ENCODE measurements at regions of chr4 and their contacts with region 1.

Region 1: DNA sequence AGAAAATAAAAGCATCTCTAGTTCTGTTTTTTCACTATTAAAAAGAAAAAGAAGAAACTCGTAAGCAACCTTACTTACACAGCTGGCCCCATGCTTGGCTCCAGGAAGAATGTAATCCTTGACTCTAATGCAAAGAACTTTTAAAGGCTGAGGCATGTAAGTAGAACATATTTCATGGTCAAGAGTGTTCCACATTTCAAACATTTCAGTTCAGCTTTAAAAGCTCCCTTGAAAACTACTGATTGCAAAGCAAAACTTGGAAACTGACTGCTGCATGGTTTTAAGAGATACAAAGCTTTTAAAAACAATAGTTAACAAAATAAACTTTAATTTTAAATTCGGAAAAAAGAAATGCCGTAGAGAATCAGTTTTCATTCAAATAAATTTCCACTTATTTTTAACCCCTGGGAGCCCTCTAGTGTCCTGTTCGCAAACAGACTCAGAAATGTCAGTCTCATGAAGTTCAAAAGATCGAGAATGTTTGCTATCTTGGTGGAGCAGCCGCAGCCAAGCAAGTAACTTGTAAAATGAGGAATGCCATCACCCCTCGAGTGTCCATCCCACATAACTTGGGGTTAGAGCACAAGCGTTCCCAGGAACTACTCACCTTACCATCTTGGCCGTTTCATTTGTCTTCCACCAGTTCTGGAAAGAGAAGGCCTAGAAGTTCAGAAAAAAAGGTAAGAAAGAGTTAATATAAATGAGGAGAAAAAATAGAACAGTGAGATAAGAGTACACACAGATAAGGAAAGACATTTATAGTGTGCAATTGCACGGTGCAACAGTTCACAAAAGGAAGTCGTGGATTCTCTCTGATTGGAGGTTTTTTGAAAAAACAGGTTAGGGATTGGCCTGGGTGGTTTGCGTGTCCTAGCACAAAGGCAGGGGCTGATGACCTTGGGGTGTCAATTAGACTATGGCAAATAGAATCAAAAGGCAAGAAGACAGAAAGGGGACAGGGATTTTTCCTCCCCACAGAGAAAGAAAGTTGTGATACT is at the start of gene GASK1B:
- DNase-seq: peak in 4 of 5 donors; percentile 39 to 57 (median 50)
- ATAC-seq: peak; percentile 49 to 74 (median 65)
- H3K4me3 ChIP-seq: peak within 1 kb of the TSS; percentile 30 to 73 (median 67)
- H3K27ac ChIP-seq: peak within 1 kb of the TSS; percentile 82 to 93 (median 88)
- H3K4me1 ChIP-seq: peaks cover 0 to 64% (median 41%) of the 10 kb centered on the region in 12 donors
- H3K27me3 ChIP-seq: no peaks in the 10 kb centered on the region
- CTCF ChIP-seq: peak; percentile 41 to 78 (median 71)
- POLR2A ChIP-seq: no peak
- total RNA-seq, gene GASK1B: 34.5 to 108 (median 73.9) TPM

Region 2: DNA sequence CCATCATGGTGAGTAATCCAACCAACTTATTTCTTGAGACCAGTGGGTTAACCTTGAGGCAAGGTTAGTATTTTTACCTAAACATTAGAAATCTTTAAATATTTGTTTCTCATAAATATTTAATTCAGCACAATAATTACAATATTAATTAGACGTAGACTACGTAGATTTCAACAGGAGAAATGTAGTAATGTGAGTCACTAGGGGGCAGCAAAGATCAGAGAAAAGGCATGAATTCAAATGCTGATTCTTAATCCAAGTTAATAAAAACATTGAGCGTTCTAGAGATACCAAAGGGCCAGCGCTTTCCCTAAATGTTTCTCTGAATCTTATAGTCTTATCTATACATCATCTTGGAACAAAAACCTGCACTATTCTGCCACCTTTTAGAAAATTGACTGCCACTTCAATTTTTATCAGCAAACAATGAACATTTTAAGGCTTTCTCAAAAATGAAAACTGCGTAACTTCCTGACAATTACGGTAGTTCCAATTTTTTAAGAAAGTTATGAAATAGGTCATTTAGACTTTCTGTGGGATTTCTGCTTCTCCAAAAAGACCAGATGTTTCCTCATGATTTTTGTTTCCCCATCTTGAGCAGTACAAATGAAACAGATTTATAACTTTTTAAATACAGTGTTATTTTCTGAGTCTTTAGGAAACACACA is 180.4 kb before region 1 on chr4:
- intact Hi-C with region 1: loop called (anchors 1 to 5 kb)
- DNase-seq: peak in 2 of 5 donors; percentile 58 to 73
- ATAC-seq: peak; percentile 73 to 92 (median 81)
- H3K4me3 ChIP-seq: peak overlapping the region in 11 of 12 donors; percentile 20 to 58 (median 46)
- H3K27ac ChIP-seq: peak overlapping the region; percentile 43 to 89 (median 72)
- H3K4me1 ChIP-seq: peaks cover 0 to 31% (median 5%) of the 10 kb centered on the region in 12 donors
- H3K27me3 ChIP-seq: no peaks in the 10 kb centered on the region
- CTCF ChIP-seq: peak; percentile 59 to 87 (median 76)
- POLR2A ChIP-seq: no peak

Region 3: GRCh38 chr4:158121187-158121586 is 51.4 kb before region 1 on chr4:
- intact Hi-C with region 1: loop called in 2 of 10 experiments (anchors 5 kb)
- DNase-seq: peak in 4 of 5 donors; percentile 22 to 36 (median 32)
- ATAC-seq: peak; percentile 62 to 90 (median 87)
- H3K4me3 ChIP-seq: peak overlapping the region in 3 of 12 donors; percentile 1 to 3 (median 3)
- H3K27ac ChIP-seq: peak overlapping the region in 10 of 12 donors; percentile 2 to 79 (median 50)
- H3K4me1 ChIP-seq: peaks cover 0 to 38% (median 15%) of the 10 kb centered on the region in 12 donors
- H3K27me3 ChIP-seq: no peaks in the 10 kb centered on the region
- CTCF ChIP-seq: no peak
- POLR2A ChIP-seq: no peak

Region 4: GRCh38 chr4:158139086-158139485 is 33.5 kb before region 1 on chr4:
- intact Hi-C with region 1: loop called in 2 of 10 experiments (anchors 5 kb)
- DNase-seq: no peak
- ATAC-seq: peak in 2 of 4 donors; percentile 34 to 44
- H3K4me3 ChIP-seq: no peak overlapping the region
- H3K27ac ChIP-seq: peak overlapping the region in 3 of 12 donors; percentile 4 to 16 (median 11)
- H3K4me1 ChIP-seq: peaks cover 0 to 63% (median 33%) of the 10 kb centered on the region in 12 donors
- H3K27me3 ChIP-seq: no peaks in the 10 kb centered on the region
- CTCF ChIP-seq: no peak
- POLR2A ChIP-seq: no peak

Region 5: GRCh38 chr4:158253350-158253980 is 80.9 kb after region 1 on chr4:
- intact Hi-C with region 1: loop called in 2 of 10 experiments (anchors 5 kb)
- DNase-seq: peak in 4 of 5 donors; percentile 33 to 52 (median 36)
- ATAC-seq: peak; percentile 34 to 81 (median 78)
- H3K4me3 ChIP-seq: no peak overlapping the region
- H3K27ac ChIP-seq: no peak overlapping the region
- H3K4me1 ChIP-seq: peaks cover 0 to 23% (median 0%) of the 10 kb centered on the region in 12 donors
- H3K27me3 ChIP-seq: no peaks in the 10 kb centered on the region
- CTCF ChIP-seq: peak; percentile 29 to 75 (median 63)
- POLR2A ChIP-seq: no peak

Region 6: GRCh38 chr4:158395889-158396288 is 223.3 kb after region 1 on chr4:
- intact Hi-C with region 1: no loop called
- DNase-seq: no peak
- ATAC-seq: no peak
- H3K4me3 ChIP-seq: no peak overlapping the region
- H3K27ac ChIP-seq: no peak overlapping the region
- H3K4me1 ChIP-seq: no peaks in the 10 kb centered on the region
- H3K27me3 ChIP-seq: no peaks in the 10 kb centered on the region
- CTCF ChIP-seq: no peak
- POLR2A ChIP-seq: no peak

Region 7: DNA sequence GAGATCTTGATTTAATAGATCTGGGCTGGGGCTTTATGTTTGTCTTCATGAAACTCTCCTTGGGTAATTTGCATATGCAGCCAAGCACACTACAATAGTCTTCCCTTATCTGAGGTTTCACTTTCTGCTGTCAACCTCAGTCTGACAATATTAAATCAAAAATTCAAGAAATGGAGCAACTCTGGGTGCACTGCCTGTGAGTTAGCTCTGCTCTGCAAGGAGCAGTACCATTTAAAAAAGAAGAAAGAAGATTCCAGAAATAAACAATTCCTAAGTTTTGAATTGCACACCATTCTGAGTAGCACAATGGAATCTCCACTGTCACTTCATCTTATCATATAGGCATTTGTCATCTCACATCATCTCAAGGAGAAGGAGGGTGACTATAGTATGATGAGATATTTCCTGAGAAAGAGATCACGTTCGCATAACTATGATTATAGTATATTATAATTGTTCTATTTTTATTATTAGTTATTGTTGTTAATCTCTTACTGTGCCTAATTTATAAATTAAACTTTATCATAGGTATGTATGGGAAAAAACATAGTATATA is 605.7 kb after region 1 on chr4:
- intact Hi-C with region 1: no loop called
- DNase-seq: no peak
- ATAC-seq: no peak
- H3K4me3 ChIP-seq: no peak overlapping the region
- H3K27ac ChIP-seq: peak overlapping the region in 2 of 12 donors; percentile 13 to 29
- H3K4me1 ChIP-seq: peaks cover 6 to 83% (median 69%) of the 10 kb centered on the region in 12 donors
- H3K27me3 ChIP-seq: no peaks in the 10 kb centered on the region
- CTCF ChIP-seq: no peak
- POLR2A ChIP-seq: no peak